GM13977 (cell line): ENCODE measurements at regions of chr16 and their contacts with region 1.

Region 1: GRCh38 chr16:58755989-58756649 is 22.0 kb upstream of the GOT2 start:
- DNase-seq: peak; percentile 76
- CTCF ChIP-seq: peak; percentile 92

Region 2: GRCh38 chr16:58336332-58337089 is 419.6 kb before region 1 on chr16:
- in situ Hi-C with region 1: loop called (anchors 10 kb)
- DNase-seq: peak; percentile 82
- CTCF ChIP-seq: peak; percentile 91

Region 3: GRCh38 chr16:58638148-58639036 is 117.7 kb before region 1 on chr16:
- in situ Hi-C with region 1: no loop called
- DNase-seq: no peak
- CTCF ChIP-seq: no peak

Region 4: GRCh38 chr16:58652461-58653140 is 103.5 kb before region 1 on chr16:
- in situ Hi-C with region 1: no loop called
- DNase-seq: no peak
- CTCF ChIP-seq: no peak

Region 5: DNA sequence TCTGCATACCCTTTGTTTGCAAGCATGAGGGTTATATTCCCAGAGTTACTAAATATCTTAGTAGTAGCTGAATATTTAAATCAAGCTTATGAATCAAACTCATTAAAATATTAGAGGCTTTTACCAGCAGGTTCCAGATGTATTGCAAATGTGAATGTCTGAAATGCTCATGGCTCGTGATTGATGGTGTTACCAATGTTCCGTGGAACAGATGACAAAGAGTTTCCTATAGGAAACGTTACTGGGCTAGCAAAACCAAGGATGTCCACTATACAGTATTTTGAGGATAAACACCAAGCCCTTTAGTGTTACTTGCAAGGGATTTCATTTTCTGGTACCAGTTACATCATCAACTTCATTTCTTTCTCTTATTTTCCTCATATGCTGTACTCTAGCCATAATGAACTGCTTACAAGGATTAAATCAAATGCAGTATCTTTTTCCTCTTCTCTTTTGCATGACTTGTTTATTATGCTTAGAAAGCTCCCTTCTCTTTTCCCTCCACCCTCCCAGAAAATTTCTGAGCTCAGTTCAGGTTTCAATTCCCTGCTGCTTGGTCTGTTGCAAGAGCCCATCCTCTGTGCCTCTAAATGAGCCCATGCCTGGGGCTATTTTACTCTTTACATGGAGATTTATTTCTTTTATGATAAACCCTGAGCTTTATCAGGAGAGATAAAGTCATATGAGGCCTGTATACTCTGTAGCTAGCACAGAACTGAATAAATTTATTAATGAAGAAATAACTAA is 1515.1 kb after region 1 on chr16:
- in situ Hi-C with region 1: no loop called
- DNase-seq: no peak
- CTCF ChIP-seq: no peak